Motor neuron (in vitro differentiated cells): ENCODE measurements at regions of chrX and their contacts with region 1.

Region 1: DNA sequence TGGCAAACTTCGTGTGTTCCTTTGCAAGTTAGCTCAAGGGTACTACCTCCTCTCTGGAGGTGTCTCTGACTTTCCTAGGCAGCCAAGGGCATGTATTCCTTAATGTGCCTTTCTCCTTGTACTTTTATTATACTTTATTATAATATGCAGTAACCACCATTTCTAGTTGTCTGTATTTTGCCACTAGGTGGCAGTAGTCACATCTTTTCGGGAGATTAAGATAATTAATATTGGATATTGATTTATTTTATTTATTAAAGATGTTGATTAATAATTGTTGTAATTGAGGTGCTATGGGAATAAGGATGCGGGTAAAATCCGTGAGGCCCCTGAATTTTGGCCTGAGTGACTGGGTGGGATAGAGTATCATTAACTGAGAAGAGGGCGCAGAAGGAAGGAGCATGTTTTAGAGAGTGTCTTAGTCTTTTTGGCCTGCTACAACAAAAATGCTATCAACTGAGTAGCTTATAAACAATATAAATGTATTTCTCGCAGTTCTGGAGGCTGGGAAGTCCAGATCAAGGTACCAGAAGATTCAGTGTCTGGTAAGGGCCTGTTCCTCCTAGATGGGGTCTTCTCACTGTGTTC is 153.3 kb downstream of the TMEM164 start:
- ATAC-seq: no peak
- H3K4me3 ChIP-seq: no peak overlapping the region
- H3K27ac ChIP-seq: no peak overlapping the region
- H3K4me1 ChIP-seq: peaks cover 0 to 5% of the 10 kb centered on the region in 2 donors

Region 2: DNA sequence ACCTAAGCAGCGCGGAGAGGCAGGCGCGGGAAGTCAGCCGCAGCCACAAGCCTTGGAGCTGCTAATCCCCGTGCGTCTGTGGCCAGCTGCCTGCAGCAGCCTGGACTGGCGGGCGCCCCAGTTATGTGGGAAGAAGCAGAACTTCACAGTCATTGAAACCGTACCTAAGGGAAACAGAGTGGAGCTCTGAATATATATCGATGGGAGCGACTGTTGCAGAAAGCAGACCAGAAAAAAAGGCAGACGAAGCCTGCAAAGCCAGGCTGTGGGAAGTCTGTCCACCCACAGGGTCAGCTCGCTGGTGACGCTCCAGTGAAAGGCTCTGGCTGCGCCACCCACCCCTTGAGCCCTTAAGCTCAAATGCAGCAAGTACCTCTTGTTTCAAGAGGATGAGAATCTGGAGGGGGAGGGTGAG is 556.0 kb before region 1 on chrX:
- in situ Hi-C with region 1: no loop called
- ATAC-seq: peak; percentile 40 to 78 (median 47)
- H3K4me3 ChIP-seq: no peak overlapping the region
- H3K27ac ChIP-seq: no peak overlapping the region
- H3K4me1 ChIP-seq: peaks cover 0 to 12% of the 10 kb centered on the region in 2 donors

Region 3: GRCh38 chrX:110036162-110037033 is 119.9 kb before region 1 on chrX:
- in situ Hi-C with region 1: no loop called
- ATAC-seq: no peak
- H3K4me3 ChIP-seq: no peak overlapping the region
- H3K27ac ChIP-seq: no peak overlapping the region
- H3K4me1 ChIP-seq: peaks cover 5 to 19% of the 10 kb centered on the region in 2 donors

Region 4: DNA sequence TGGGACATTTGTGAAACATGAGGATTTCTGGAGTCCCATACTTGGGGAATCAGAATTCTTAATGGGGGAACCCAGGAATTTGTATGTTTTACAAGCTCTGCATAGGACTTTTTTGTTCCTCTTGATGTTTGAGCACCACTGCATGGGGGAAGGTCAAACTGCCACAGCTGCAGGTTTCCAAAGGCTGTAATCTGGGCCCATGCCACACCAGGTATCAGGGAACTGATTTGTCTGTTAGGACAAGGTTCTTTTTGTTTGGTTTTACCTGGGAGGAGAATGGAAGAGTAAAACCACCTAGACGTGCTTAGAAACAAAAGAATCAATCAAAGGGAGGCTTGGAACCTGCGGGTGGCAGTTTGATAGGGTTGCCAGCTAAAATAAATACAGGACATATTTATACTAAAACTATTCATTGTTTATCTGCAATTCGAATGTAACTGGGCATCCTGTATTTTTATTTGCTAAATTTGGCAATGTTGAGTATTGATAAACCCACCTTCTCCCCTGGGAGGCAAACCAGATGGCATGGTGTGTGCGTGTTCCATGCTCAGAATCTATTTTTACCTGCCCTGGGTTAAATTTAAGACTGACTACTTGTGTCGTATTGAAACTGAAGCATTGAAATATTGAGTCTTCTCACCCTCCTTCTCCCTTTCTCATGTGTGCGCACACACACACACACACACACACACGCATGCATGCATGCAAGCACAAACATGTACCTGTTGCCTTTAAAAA is 89.6 kb before region 1 on chrX:
- in situ Hi-C with region 1: no loop called
- ATAC-seq: no peak
- H3K4me3 ChIP-seq: no peak overlapping the region
- H3K27ac ChIP-seq: no peak overlapping the region
- H3K4me1 ChIP-seq: no peaks in the 10 kb centered on the region

Region 5: GRCh38 chrX:110407910-110408545 is 251.8 kb after region 1 on chrX:
- in situ Hi-C with region 1: loop called in 7 of 9 experiments (anchors 5 to 25 kb)
- ATAC-seq: peak in 5 of 8 experiments; percentile 64 to 74 (median 72)
- H3K4me3 ChIP-seq: no peak overlapping the region
- H3K27ac ChIP-seq: no peak overlapping the region
- H3K4me1 ChIP-seq: peaks cover 0 to 3% of the 10 kb centered on the region in 2 donors

Region 6: GRCh38 chrX:110412971-110413721 is 256.9 kb after region 1 on chrX:
- in situ Hi-C with region 1: loop called in 7 of 9 experiments (anchors 5 to 25 kb)
- ATAC-seq: peak; percentile 96 to 100 (median 96)
- H3K4me3 ChIP-seq: no peak overlapping the region
- H3K27ac ChIP-seq: no peak overlapping the region
- H3K4me1 ChIP-seq: peaks cover 10 to 19% of the 10 kb centered on the region in 2 donors